ENCODE measurements at regions of chr11 and their contacts with region 1.

Region 1: DNA sequence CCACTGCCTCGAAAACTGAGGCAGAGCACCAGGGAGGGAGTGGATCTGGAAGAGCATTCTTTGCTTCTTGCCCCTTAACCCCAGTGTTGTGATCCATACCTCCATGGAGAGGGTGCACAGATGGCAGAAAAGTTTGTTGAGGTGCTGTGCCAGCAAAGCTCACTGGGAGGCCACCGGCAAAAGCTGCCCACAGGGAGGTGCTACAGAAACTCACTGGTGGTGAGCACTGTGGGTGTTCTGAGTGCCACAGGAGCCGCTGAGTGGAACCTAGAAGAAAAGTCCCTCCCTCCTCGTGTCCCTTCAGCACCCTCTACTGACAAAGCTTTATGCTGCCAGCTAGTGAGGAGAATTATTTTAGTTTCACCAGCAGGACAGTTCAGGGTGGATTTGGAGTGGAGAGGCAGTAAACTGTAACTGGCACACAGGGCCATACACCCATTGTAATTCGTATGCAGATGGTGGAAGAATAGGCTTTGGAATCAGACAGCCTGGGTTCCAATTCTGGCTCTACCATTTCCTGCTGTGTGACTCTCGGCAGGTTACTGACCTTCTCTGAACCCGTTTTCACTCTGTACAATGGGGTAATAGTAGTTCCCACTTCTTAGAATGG is 84.6 kb downstream of the SWAP70 start:
- DNase-seq: peak; percentile 91
- H3K4me3 ChIP-seq: no peak overlapping the region
- H3K27ac ChIP-seq: peak overlapping the region; percentile 69
- H3K4me1 ChIP-seq: peaks cover 18% of the 10 kb centered on the region
- H3K27me3 ChIP-seq: no peaks in the 10 kb centered on the region
- CTCF ChIP-seq: peak; percentile 84

Region 2: DNA sequence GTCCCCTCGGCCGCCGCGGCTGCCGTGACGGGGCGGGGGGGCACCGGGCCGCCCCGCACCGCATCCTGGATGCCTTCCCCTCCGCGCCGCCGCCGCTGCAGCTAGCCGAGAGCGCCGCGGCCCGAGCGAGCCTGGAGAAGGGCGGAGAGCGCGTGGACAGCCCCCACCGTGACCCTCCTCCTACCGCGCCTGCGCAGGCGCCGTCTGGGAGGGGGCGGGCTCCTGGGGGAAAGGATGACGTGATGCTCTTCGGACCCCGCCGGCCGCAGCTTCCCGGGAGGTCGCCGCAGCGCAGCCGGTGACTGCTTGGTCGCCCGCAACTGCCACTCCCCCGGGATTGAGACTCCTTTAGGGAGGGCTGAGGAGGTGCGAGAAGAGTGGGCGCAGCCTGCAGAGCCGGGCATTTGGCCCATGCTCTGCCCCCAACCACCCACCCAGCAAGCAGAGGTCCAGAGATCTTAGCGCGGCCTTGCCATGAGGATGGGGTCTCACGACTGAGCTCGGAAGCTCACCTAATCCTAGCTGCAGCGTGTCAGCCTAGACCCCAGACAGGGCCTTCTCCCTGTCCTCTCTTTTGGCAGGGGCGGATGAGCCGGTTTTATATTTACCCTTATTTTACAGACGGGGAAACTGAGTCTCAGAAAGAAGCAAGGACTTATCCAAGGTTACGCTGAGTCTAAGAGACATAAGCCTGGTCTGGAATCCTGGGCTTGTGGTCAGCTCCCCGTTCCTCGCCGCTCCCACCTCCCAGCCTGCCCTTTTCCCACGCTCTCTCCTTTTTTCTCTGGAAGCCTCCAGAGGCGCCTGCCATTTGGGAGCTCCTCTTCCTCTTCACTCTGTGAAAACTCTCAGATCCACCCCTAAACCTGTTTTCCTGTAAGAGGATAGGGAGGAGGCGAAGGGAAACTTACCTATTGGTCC is 483.0 kb before region 1 on chr11 and contains the start of gene DENND5A:
- CTCF ChIA-PET with region 1: no interaction called
- POLR2A ChIA-PET with region 1: no interaction called
- intact Hi-C with region 1: no loop called
- DNase-seq: peak; percentile 81
- H3K4me3 ChIP-seq: peak within 1 kb of the TSS; percentile 78
- H3K27ac ChIP-seq: peak within 1 kb of the TSS; percentile 85
- H3K4me1 ChIP-seq: peaks cover 22% of the 10 kb centered on the region
- H3K27me3 ChIP-seq: no peaks in the 10 kb centered on the region
- CTCF ChIP-seq: no peak
- total RNA-seq, gene DENND5A: 65.4 and 69.7 TPM in 2 replicates

Region 3: GRCh38 chr11:9534791-9535781 is 213.4 kb before region 1 on chr11:
- CTCF ChIA-PET with region 1: interaction called, 6 read pairs
- POLR2A ChIA-PET with region 1: no interaction called
- intact Hi-C with region 1: loop called (anchors 10 kb)
- DNase-seq: peak; percentile 67
- H3K4me3 ChIP-seq: no peak overlapping the region
- H3K27ac ChIP-seq: no peak overlapping the region
- H3K4me1 ChIP-seq: no peaks in the 10 kb centered on the region
- H3K27me3 ChIP-seq: no peaks in the 10 kb centered on the region
- CTCF ChIP-seq: peak; percentile 85